GM12878 (cell line): ENCODE measurements at regions of chr4 and their contacts with region 1.

Region 1: DNA sequence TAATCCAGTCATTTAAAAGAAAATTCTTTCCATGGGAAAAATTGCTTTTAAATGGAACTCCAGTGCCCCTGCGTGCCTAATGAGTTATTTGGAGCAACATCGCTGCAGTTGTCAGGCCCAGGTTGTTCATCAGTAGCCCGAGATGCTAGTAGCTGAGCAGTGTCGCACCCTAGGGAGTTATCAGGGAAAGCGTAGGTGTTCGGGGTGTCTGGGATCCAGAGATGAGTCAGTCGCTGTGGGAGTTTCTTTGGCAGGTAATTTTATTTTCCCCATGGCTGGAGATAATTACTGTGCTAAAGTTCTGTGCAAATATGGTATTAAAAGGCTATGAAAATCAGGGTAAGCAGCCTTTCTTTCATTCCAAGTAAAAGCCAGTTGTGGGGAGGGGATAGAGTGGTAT is 49.4 kb downstream of the ANXA3 start:
- DNase-seq: peak; percentile 63
- ATAC-seq: peak; percentile 92
- H3K4me3 ChIP-seq: no peak overlapping the region
- H3K27ac ChIP-seq: no peak overlapping the region
- H3K4me1 ChIP-seq: no peaks in the 10 kb centered on the region
- H3K27me3 ChIP-seq: no peaks in the 10 kb centered on the region
- CTCF ChIP-seq: peak in 1 of 3 experiments; percentile 16; a peak in 1 of 6 replicates
- EP300 ChIP-seq: peak; percentile 44 to 83; a peak in 3 of 4 replicates
- POLR2A ChIP-seq: no peak
- RAD21 ChIP-seq: no peak

Region 2: GRCh38 chr4:78542373-78542772 is 58.6 kb before region 1 on chr4:
- CTCF ChIA-PET with region 1: no interaction called
- POLR2A ChIA-PET with region 1: no interaction called
- RAD21 ChIA-PET with region 1: no interaction called
- SMC1A ChIA-PET with region 1: no interaction called
- in situ Hi-C with region 1: no loop called
- intact Hi-C with region 1: no loop called
- DNase-seq: no peak
- ATAC-seq: no peak
- H3K4me3 ChIP-seq: no peak overlapping the region
- H3K27ac ChIP-seq: no peak overlapping the region
- H3K4me1 ChIP-seq: no peaks in the 10 kb centered on the region
- H3K27me3 ChIP-seq: no peaks in the 10 kb centered on the region
- CTCF ChIP-seq: no peak
- EP300 ChIP-seq: no peak
- POLR2A ChIP-seq: no peak
- RAD21 ChIP-seq: no peak

Region 3: GRCh38 chr4:78569291-78569821 is 31.7 kb before region 1 on chr4:
- CTCF ChIA-PET with region 1: interaction called, 12 read pairs
- POLR2A ChIA-PET with region 1: interaction called, 4 read pairs
- RAD21 ChIA-PET with region 1: interaction called, 19 read pairs
- SMC1A ChIA-PET with region 1: interaction called, 28 read pairs
- in situ Hi-C with region 1: no loop called
- intact Hi-C with region 1: no loop called
- DNase-seq: no peak
- ATAC-seq: no peak
- H3K4me3 ChIP-seq: no peak overlapping the region
- H3K27ac ChIP-seq: no peak overlapping the region
- H3K4me1 ChIP-seq: peaks cover 6% of the 10 kb centered on the region
- H3K27me3 ChIP-seq: no peaks in the 10 kb centered on the region
- CTCF ChIP-seq: no peak
- EP300 ChIP-seq: no peak
- POLR2A ChIP-seq: no peak
- RAD21 ChIP-seq: no peak